CD4-positive, alpha-beta memory T cell (primary cell): ENCODE measurements at regions of chr16 and their contacts with region 1.

Region 1: GRCh38 chr16:17467923-17468540 is 2.7 kb downstream of the XYLT1 start:
- DNase-seq: peak in 4 of 5 donors; percentile 29 to 45 (median 32)
- H3K4me3 ChIP-seq: peak overlapping the region in 1 of 2 donors; percentile 68
- H3K4me3 Mint-ChIP-seq: peak overlapping the region; percentile 70 to 99 (median 94)
- H3K27ac ChIP-seq: no peak overlapping the region
- H3K27ac Mint-ChIP-seq: peak overlapping the region in 6 of 7 donors; percentile 24 to 97 (median 48)
- H3K4me1 ChIP-seq: peaks cover 39% of the 10 kb centered on the region
- H3K4me1 Mint-ChIP-seq: peaks cover 42 to 66% (median 49%) of the 10 kb centered on the region in 4 donors
- H3K27me3 ChIP-seq: no peaks in the 10 kb centered on the region
- H3K27me3 Mint-ChIP-seq: no peaks in the 10 kb centered on the region

Region 2: DNA sequence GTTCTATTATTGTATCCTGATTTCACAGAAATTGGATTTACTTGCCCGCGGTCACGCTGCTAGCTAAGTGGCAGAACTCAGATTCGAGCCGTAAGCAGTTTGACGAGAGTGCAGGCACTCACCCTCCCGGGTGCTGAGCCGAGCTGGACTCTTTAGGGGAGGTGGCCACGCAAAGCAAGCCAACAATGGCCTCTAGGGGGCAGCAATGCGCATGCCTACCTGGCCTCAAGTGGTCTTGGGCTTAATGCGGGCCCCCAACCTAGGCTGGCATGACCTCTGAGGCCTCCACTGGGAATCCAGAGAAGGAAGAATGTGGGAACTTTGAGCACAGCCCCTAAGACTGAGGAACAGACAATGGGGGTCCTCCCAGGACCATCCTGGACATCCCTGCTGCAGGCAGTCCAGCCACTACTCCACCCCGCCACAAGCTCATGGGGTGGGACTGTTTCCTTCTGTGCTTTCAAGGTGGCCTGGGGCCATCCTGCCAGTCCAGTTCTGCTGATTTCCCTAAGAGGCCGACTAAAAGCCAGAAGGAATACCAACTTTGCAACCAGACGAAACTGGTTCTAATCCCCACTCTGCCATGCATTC is 273.7 kb before region 1 on chr16:
- CTCF ChIA-PET with region 1: interaction called, 22 read pairs
- POLR2A ChIA-PET with region 1: interaction called, 3 read pairs
- intact Hi-C with region 1: loop called (anchors 1 kb)
- DNase-seq: peak; percentile 26 to 52 (median 44)
- H3K4me3 ChIP-seq: no peak overlapping the region
- H3K4me3 Mint-ChIP-seq: no peak overlapping the region
- H3K27ac ChIP-seq: no peak overlapping the region
- H3K27ac Mint-ChIP-seq: no peak overlapping the region
- H3K4me1 ChIP-seq: no peaks in the 10 kb centered on the region
- H3K4me1 Mint-ChIP-seq: peaks cover 0 to 5% (median 0%) of the 10 kb centered on the region in 4 donors
- H3K27me3 ChIP-seq: no peaks in the 10 kb centered on the region
- H3K27me3 Mint-ChIP-seq: no peaks in the 10 kb centered on the region

Region 3: DNA sequence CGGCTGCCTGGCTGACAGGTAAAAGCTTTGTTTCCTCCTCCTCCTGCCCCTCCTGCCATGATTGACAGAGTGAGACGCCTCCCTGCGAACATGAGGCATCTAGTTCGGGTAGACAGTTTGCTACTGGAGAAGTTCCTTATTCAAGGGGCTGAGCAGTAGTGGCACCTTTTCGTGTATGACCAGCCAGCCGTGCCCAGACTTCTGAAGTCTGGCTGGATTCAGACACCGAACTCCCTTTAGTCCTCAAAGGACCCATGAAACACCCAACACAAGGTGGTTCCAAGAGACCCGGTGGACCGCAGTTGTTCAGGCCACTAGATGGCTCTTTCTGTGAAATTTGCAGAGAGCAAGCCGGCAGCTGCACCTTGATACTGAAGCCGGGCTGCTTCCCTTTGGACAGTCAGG is 190.1 kb before region 1 on chr16:
- CTCF ChIA-PET with region 1: interaction called, 12 read pairs
- POLR2A ChIA-PET with region 1: interaction called, 4 read pairs
- intact Hi-C with region 1: loop called (anchors 5 kb)
- DNase-seq: no peak
- H3K4me3 ChIP-seq: no peak overlapping the region
- H3K4me3 Mint-ChIP-seq: no peak overlapping the region
- H3K27ac ChIP-seq: no peak overlapping the region
- H3K27ac Mint-ChIP-seq: peak overlapping the region in 3 of 7 donors; percentile 3 to 74 (median 64)
- H3K4me1 ChIP-seq: peaks cover 16% of the 10 kb centered on the region
- H3K4me1 Mint-ChIP-seq: peaks cover 30 to 55% (median 37%) of the 10 kb centered on the region in 4 donors
- H3K27me3 ChIP-seq: no peaks in the 10 kb centered on the region
- H3K27me3 Mint-ChIP-seq: no peaks in the 10 kb centered on the region

Region 4: DNA sequence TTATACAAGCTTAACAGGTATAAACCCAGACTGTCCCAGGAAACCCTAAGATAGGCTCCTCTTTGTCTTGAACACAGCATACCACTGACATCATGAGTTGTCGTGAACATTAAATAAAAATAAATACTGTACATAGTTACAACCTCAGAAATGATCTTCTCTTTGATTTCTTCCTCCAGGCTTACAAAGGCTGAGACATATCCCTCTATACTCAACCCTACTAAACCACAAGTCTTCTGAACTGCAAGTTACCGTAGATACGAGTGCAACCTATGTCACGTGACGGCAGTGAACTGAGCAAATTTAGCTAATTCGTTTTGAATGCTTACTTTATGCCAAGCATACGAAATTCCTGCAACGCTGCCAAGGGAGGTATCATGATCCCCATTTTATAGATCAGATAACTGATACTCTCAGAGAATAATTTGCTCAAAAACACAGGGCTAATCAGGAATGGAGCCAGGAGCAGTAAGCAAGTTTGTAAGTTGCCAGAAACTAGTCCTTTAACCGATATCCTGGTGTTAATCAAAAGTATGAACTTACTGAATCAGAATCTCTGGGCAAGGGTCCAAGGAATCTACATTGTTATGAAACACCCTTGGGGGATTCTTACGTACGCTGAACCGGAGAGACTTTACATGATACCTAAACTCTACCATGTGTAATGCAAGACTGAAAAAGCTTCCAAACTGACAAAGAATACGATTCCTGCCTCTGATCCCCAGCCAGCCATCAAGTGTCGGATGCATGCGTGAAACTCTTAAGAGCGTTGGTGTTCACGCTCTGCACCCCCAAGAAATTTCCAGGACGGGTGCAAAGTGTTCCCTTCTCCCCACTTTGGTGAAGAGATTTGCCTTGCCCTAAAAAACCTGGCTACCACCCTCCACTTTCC is 103.5 kb before region 1 on chr16:
- CTCF ChIA-PET with region 1: interaction called, 24 read pairs
- POLR2A ChIA-PET with region 1: interaction called, 32 read pairs
- intact Hi-C with region 1: loop called (anchors 1 kb)
- DNase-seq: peak; percentile 85 to 91 (median 87)
- H3K4me3 ChIP-seq: peak overlapping the region; percentile 10 to 18
- H3K4me3 Mint-ChIP-seq: peak overlapping the region; percentile 52 to 77 (median 68)
- H3K27ac ChIP-seq: peak overlapping the region; percentile 72
- H3K27ac Mint-ChIP-seq: peak overlapping the region; percentile 95 to 100 (median 99)
- H3K4me1 ChIP-seq: peaks cover 100% of the 10 kb centered on the region
- H3K4me1 Mint-ChIP-seq: peaks cover 84 to 100% (median 94%) of the 10 kb centered on the region in 4 donors
- H3K27me3 ChIP-seq: no peaks in the 10 kb centered on the region
- H3K27me3 Mint-ChIP-seq: no peaks in the 10 kb centered on the region

Region 5: DNA sequence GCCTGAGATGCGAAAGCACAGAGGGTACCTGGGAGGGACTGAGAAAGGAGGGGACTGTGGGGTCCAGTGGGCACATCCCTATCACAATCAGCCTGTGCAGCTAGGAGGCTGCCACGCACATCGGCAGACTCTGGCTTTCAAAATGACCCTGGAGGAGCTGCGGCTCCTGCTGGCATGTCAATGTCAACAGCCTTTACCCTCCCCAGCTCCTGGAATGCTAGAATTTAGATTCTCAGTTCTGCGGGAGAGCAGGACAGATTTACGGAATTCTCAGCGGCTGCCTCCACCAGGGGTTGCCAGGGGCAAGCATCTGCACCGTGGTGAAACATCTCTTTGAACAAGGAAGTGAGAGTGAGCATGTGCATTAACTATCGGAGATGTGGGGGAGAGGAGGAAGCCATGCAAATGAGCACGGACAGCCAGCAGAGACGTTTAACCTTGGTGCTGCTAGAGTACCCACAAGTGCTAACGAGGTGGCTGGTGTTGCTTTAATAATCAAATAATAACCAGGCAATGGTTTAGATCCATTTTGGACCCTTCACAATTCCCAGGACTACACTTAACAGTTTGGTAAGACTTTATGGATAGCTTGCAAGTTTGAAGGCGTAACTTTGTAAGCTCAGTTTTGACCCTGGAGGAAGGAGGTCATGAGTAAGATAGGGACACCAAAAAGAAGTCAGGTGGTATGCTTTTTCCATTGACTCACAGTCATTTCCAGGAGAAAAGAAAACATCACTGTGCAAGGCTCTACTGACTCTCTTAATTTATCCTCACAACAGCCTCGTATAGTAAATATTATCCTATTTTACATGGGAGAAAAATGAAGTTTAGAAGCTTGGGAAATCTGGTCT is 51.3 kb before region 1 on chr16:
- CTCF ChIA-PET with region 1: interaction called, 17 read pairs
- POLR2A ChIA-PET with region 1: interaction called, 11 read pairs
- intact Hi-C with region 1: loop called (anchors 1 kb)
- DNase-seq: peak; percentile 61 to 69 (median 65)
- H3K4me3 ChIP-seq: peak overlapping the region; percentile 37 to 58
- H3K4me3 Mint-ChIP-seq: peak overlapping the region; percentile 80 to 93 (median 87)
- H3K27ac ChIP-seq: peak overlapping the region; percentile 46
- H3K27ac Mint-ChIP-seq: peak overlapping the region; percentile 82 to 95 (median 92)
- H3K4me1 ChIP-seq: peaks cover 45% of the 10 kb centered on the region
- H3K4me1 Mint-ChIP-seq: peaks cover 41 to 70% (median 60%) of the 10 kb centered on the region in 4 donors
- H3K27me3 ChIP-seq: no peaks in the 10 kb centered on the region
- H3K27me3 Mint-ChIP-seq: no peaks in the 10 kb centered on the region

Region 6: GRCh38 chr16:17571499-17572093 is 103.6 kb after region 1 on chr16:
- CTCF ChIA-PET with region 1: no interaction called
- POLR2A ChIA-PET with region 1: no interaction called
- intact Hi-C with region 1: no loop called
- DNase-seq: no peak
- H3K4me3 ChIP-seq: no peak overlapping the region
- H3K4me3 Mint-ChIP-seq: no peak overlapping the region
- H3K27ac ChIP-seq: no peak overlapping the region
- H3K27ac Mint-ChIP-seq: no peak overlapping the region
- H3K4me1 ChIP-seq: no peaks in the 10 kb centered on the region
- H3K4me1 Mint-ChIP-seq: peaks cover 0 to 2% (median 0%) of the 10 kb centered on the region in 4 donors
- H3K27me3 ChIP-seq: no peaks in the 10 kb centered on the region
- H3K27me3 Mint-ChIP-seq: peaks cover 5 to 6% of the 10 kb centered on the region in 2 donors

Region 7: GRCh38 chr16:17817260-17817659 is 349.2 kb after region 1 on chr16:
- CTCF ChIA-PET with region 1: no interaction called
- POLR2A ChIA-PET with region 1: no interaction called
- intact Hi-C with region 1: no loop called
- DNase-seq: no peak
- H3K4me3 ChIP-seq: no peak overlapping the region
- H3K4me3 Mint-ChIP-seq: no peak overlapping the region
- H3K27ac ChIP-seq: no peak overlapping the region
- H3K27ac Mint-ChIP-seq: no peak overlapping the region
- H3K4me1 ChIP-seq: no peaks in the 10 kb centered on the region
- H3K4me1 Mint-ChIP-seq: no peaks in the 10 kb centered on the region
- H3K27me3 ChIP-seq: no peaks in the 10 kb centered on the region
- H3K27me3 Mint-ChIP-seq: peaks cover 1 to 3% of the 10 kb centered on the region in 2 donors